Common myeloid progenitor, CD34-positive (primary cell): ENCODE measurements at regions of chr12 and their contacts with region 1.

Region 1: DNA sequence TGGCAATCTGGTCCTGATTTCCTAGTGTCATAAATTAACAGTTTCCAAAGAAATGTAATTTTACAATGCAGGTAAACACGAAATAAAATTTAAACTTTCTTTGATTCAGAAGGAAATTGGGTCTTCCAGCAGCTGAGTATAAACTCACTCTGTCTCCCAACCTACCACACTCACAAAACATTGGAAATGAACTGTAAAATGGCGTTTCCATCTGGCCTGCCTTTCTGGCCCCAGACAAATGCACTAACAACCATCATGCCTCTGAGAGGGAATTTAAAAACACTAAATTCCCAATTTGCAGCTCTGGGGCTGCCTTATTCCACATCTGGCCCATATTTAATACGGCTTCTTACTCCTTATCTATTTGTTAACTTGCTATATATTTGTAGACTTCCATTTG is 19.3 kb downstream of the ATP2B1 start:
- DNase-seq: no peak
- H3K4me3 ChIP-seq: no peak overlapping the region
- H3K27ac ChIP-seq: no peak overlapping the region
- H3K4me1 ChIP-seq: no peaks in the 10 kb centered on the region
- H3K27me3 ChIP-seq: no peaks in the 10 kb centered on the region

Region 2: DNA sequence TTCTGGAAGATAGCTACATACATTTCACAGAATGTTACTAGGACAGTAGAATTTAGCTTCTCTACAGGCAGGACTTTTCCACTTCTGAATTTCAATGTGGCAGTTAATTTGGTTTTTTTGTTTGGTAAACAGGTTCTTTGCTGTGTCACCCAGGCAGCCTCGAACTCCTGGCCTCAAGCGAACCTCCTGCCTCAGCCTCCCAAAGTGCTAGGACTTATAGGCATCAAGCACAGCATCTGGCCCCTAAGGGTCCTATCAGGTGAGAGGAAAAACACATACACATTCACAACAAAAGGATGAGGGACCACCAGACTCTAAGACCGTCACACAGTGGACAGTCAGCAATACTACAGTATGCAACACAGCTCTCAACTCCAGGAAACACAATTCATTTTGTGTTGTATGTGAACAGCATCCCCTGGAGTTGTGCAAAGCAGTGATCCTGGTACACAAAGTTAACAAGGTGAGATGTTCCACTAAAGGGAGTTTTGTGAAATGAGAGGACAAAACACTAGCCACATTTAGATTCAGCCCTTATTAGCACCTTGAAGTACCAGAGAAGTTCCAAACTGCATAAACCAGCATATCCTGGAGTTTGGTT is 12.4 kb after region 1 on chr12:
- CTCF ChIA-PET with region 1: interaction called, 12 read pairs
- POLR2A ChIA-PET with region 1: no interaction called
- DNase-seq: no peak
- H3K4me3 ChIP-seq: no peak overlapping the region
- H3K27ac ChIP-seq: no peak overlapping the region
- H3K4me1 ChIP-seq: peaks cover 0 to 6% (median 2%) of the 10 kb centered on the region in 4 experiments
- H3K27me3 ChIP-seq: no peaks in the 10 kb centered on the region